OCI-LY7 (cell line): ENCODE measurements at regions of chr1 and their contacts with region 1.

Region 1: GRCh38 chr1:51439053-51439452 is 80.0 kb downstream of the EPS15 start:
- DNase-seq: no peak
- H3K4me3 ChIP-seq: no peak overlapping the region
- H3K27ac ChIP-seq: no peak overlapping the region
- H3K4me1 ChIP-seq: peaks cover 4% of the 10 kb centered on the region
- CTCF ChIP-seq: no peak

Region 2: DNA sequence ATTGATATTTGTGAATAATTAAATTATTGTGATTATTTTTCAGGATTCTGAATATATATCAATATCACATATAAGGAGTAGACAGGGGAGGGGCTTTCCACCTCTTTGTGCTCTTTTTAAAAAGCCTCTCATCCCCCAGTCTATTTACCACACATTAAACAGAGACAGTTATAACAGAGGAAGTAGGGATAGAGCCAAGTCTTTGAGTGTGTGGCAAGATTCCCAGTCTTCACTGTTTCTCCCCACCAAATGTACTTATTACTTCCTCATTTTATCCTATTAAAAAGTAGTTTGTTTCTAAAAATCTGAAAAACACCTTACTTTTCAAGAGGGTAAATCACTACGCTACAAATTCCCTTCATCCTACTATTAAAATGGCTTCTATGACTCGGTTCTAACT is 33.3 kb after region 1 on chr1:
- CTCF ChIA-PET with region 1: no interaction called
- POLR2A ChIA-PET with region 1: interaction called, 7 read pairs
- intact Hi-C with region 1: loop called (anchors 5 kb)
- DNase-seq: no peak
- H3K4me3 ChIP-seq: no peak overlapping the region
- H3K27ac ChIP-seq: no peak overlapping the region
- H3K4me1 ChIP-seq: no peaks in the 10 kb centered on the region
- CTCF ChIP-seq: no peak

Region 3: DNA sequence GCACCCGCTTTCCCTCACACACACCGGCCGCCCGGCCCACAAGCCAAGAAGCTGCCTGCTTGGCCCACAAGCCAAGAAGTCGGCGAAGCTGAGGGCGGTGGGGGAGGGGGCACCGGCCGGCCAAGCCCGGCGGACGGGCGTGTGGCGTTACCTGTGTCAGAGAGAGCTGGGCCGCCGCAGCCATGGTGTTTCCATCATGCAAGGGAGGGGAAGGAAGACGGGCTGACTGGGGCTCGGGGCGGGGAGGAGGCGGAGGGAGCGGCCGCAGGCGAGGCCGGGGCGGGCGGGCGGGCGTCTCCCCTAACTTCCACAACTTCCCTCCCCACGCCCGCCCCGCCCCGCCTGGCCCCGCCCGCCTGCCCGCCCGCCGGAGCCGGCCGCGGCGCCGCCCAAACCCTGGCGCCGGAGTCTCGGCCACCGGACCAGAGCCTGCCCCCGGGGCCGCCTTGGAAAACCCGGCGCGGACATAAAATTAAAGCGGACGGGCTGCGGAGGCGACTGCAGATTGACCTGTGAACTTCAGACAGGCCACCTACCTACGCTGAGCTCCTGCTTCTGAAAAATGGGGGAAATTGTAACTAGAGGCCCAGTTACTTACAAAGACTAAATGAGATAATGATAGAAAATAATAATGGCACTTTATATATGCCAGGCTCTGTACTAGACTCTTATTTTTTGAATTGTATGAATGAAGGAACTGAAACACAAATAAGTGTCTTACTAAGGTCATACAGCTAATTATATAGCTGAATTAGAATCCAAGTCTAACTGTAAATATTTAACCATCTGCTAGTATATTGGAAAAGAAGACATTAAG is 80.2 kb after region 1 on chr1 and contains the start of gene EPS15:
- CTCF ChIA-PET with region 1: no interaction called
- POLR2A ChIA-PET with region 1: no interaction called
- intact Hi-C with region 1: no loop called
- DNase-seq: peak; percentile 89
- H3K4me3 ChIP-seq: peak within 1 kb of the TSS; percentile 95
- H3K27ac ChIP-seq: peak within 1 kb of the TSS; percentile 82
- H3K4me1 ChIP-seq: peaks cover 22% of the 10 kb centered on the region
- CTCF ChIP-seq: no peak
- total RNA-seq, gene EPS15: 23.8 and 35.5 TPM in 2 replicates

Region 4: DNA sequence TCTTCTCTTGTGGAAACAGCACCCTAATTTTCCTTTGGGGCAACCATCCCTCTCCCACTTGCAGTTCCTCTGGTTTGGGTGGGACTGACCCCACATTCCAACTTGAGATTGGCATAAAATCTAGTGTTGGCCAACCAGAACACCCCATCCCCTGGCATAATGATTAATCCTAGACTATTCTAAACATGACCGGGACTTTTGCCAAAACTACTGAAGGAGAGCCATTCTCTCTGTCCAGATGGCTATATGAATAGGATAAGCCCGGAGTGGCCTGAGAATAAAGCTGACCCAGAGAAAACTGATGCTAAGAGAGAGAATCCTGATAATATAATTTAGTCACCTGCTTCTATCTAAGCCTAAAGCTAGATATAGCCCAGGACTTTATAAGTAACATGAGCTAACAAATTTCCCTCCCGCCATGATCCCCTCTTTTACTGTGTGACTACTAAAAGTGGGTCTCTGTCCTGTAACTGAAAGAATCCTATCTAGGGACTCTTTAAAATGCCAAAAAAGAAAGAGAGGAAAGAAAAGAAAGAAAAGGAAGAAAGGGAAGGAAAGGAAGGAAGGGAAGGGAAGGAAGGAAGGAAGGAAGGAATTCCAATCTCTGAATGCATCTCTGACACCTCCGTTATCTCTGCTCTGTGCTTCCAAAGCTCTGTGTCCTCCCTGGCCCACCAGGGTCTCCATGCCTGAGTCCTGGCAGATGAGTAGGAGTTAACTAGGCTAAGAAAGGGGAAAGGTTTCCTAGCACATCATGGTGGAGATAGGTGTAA is 467.4 kb after region 1 on chr1:
- CTCF ChIA-PET with region 1: no interaction called
- POLR2A ChIA-PET with region 1: no interaction called
- intact Hi-C with region 1: no loop called
- DNase-seq: no peak
- H3K4me3 ChIP-seq: no peak overlapping the region
- H3K27ac ChIP-seq: no peak overlapping the region
- H3K4me1 ChIP-seq: peaks cover 5% of the 10 kb centered on the region
- CTCF ChIP-seq: no peak